ENCODE measurements at regions of chr2 and their contacts with region 1.

Region 1: DNA sequence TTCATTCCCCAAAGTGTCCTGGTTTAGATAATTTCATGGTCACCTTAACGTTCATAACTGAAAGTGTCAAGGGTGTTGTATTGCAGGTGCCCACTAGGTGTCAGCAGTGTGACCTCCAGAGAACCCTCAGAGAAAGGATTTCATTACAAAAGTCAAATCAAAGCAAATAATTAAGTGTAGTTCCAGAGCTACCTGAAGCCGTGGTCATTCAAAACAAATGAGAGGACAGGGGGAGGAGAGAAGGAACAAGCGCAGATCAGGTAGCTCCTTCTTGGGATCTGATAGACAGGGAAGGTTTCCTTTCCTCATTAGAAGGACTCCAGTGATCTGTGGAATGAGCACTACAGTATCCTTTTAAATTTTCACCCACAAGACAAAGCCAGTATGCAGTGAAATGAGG is at the start of gene SLC9A4:
- DNase-seq: peak; percentile 62
- H3K4me3 ChIP-seq: no peak within 1 kb of the TSS
- H3K27ac ChIP-seq: no peak within 1 kb of the TSS
- H3K4me1 ChIP-seq: no peaks in the 10 kb centered on the region
- H3K27me3 ChIP-seq: peaks cover 31 to 49% of the 10 kb centered on the region in 2 experiments
- CTCF ChIP-seq: peak; percentile 76 to 80
- POLR2A ChIP-seq: no peak
- total RNA-seq, gene SLC9A4: 0.07 TPM in 1 of 2 replicates, not detected in the other

Region 2: DNA sequence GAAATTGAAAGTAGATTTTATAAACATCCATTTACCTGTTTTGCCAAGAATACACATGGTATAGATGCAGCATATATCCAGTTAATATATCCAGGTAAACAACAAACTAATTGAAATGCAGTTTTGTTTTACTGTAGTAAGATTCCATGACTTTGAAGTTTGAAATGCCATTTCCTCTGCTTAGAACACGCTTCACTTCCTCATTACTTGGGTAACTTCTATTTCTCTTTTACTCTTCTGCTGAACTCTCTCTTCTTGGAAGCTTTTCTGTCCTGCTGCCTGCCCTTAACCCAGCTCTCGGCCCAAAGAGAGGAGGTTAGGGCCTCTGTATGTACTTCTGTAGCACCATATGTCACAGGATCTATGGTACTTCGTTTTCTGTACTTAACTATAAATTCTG is 300.3 kb before region 1 on chr2:
- CTCF ChIA-PET with region 1: no interaction called
- POLR2A ChIA-PET with region 1: no interaction called
- dilution Hi-C with region 1: no loop called
- intact Hi-C with region 1: no loop called
- DNase-seq: no peak
- H3K4me3 ChIP-seq: no peak overlapping the region
- H3K27ac ChIP-seq: no peak overlapping the region
- H3K4me1 ChIP-seq: no peaks in the 10 kb centered on the region
- H3K27me3 ChIP-seq: no peaks in the 10 kb centered on the region
- CTCF ChIP-seq: no peak
- POLR2A ChIP-seq: no peak

Region 3: GRCh38 chr2:102321941-102322719 is 150.9 kb before region 1 on chr2:
- CTCF ChIA-PET with region 1: no interaction called
- POLR2A ChIA-PET with region 1: no interaction called
- dilution Hi-C with region 1: no loop called
- intact Hi-C with region 1: no loop called
- DNase-seq: peak; percentile 51
- H3K4me3 ChIP-seq: no peak overlapping the region
- H3K27ac ChIP-seq: no peak overlapping the region
- H3K4me1 ChIP-seq: peaks cover 16% of the 10 kb centered on the region
- H3K27me3 ChIP-seq: no peaks in the 10 kb centered on the region
- CTCF ChIP-seq: no peak
- POLR2A ChIP-seq: no peak

Region 4: DNA sequence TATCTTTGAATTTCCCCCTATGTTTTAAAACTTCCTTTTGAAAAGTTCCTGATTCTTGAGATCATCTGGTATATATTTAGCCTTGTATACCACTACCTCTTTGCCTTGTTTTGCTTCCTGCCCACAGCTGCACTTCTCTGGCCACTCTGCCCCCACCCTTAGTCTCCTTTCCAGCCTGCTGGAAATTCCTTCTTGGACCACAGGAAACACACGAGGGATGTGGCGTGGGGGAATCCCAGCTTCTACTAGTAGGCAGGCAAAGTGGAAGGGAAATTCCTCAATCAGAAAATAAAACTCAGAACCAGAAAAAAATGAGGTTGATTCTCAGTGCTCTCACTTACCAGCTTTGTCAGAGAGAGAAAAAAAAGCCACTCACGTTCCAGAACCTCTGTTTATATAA is 36.7 kb before region 1 on chr2:
- CTCF ChIA-PET with region 1: no interaction called
- POLR2A ChIA-PET with region 1: no interaction called
- dilution Hi-C with region 1: no loop called
- intact Hi-C with region 1: no loop called
- DNase-seq: peak; percentile 79
- H3K4me3 ChIP-seq: no peak overlapping the region
- H3K27ac ChIP-seq: no peak overlapping the region
- H3K4me1 ChIP-seq: peaks cover 7% of the 10 kb centered on the region
- H3K27me3 ChIP-seq: no peaks in the 10 kb centered on the region
- CTCF ChIP-seq: no peak
- POLR2A ChIP-seq: no peak

Region 5: DNA sequence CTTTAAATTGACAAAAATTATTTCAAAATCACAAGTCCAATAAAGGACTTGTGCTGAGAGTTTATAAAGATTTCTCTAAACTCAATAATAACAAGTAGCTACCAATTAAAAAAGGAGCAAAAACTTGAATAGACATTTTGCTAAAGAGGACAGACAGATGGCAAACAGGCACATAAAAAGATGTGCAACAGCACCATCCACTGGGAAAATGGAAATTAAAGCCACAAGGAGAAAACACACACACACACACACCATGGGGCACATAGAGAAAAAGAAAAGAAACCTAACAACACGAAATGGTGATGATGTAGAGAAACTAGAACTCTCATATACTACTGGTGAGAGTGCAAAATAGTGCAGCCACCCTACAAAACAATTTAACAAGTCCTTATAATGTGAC is 12.6 kb before region 1 on chr2:
- CTCF ChIA-PET with region 1: interaction called, 10 read pairs
- POLR2A ChIA-PET with region 1: no interaction called
- dilution Hi-C with region 1: no loop called
- intact Hi-C with region 1: no loop called
- DNase-seq: no peak
- H3K4me3 ChIP-seq: no peak overlapping the region
- H3K27ac ChIP-seq: no peak overlapping the region
- H3K4me1 ChIP-seq: no peaks in the 10 kb centered on the region
- H3K27me3 ChIP-seq: peaks cover 9 to 19% of the 10 kb centered on the region in 2 experiments
- CTCF ChIP-seq: no peak
- POLR2A ChIP-seq: no peak

Region 6: DNA sequence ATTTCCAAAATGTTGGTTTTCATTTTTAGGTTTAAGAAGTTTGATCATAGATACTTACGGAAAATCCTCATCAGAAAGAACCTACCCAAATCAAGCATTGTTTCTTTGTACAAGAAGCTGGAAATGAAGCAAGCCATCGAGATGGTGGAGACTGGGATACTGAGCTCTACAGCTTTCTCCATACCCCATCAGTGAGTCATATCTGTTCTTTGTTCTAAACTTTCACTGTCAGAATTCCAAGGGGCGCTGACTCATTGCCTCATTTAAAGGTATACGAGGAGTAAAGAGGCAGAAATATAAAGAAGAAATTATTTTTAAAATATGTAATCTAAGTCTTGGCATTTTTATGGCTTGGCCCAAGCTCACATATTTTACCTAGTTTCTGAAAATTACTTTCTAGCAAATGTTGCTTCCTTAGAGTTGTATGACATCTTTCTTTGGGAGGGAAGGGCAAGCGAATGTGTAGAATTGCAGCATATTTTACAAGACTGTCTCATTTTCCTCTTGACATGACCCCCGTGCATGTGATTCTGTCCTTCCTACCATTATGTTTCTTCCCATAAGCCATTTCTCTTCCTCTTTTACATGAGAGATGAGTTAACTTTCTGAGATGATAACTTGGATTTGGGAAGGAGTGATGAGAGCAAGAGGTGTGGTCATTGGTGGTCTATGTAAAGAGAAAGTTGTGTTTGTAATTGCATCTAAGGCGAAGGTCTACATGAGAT is 41.2 kb after region 1 on chr2:
- CTCF ChIA-PET with region 1: interaction called, 13 read pairs
- POLR2A ChIA-PET with region 1: no interaction called
- dilution Hi-C with region 1: no loop called
- intact Hi-C with region 1: no loop called
- DNase-seq: peak; percentile 95
- H3K4me3 ChIP-seq: peak overlapping the region in 1 of 3 experiments; percentile 45
- H3K27ac ChIP-seq: peak overlapping the region; percentile 92
- H3K4me1 ChIP-seq: peaks cover 25% of the 10 kb centered on the region
- H3K27me3 ChIP-seq: no peaks in the 10 kb centered on the region
- CTCF ChIP-seq: no peak
- POLR2A ChIP-seq: peak; percentile 39

Region 7: GRCh38 chr2:102592597-102592996 is 119.6 kb after region 1 on chr2:
- CTCF ChIA-PET with region 1: interaction called, 70 read pairs
- POLR2A ChIA-PET with region 1: no interaction called
- dilution Hi-C with region 1: loop called (anchors 25 kb)
- intact Hi-C with region 1: loop called (anchors 1 kb)
- DNase-seq: peak; percentile 36
- H3K4me3 ChIP-seq: no peak overlapping the region
- H3K27ac ChIP-seq: no peak overlapping the region
- H3K4me1 ChIP-seq: no peaks in the 10 kb centered on the region
- H3K27me3 ChIP-seq: peaks cover 12 to 20% of the 10 kb centered on the region in 2 experiments
- CTCF ChIP-seq: peak; percentile 38 to 52
- POLR2A ChIP-seq: no peak

Region 8: DNA sequence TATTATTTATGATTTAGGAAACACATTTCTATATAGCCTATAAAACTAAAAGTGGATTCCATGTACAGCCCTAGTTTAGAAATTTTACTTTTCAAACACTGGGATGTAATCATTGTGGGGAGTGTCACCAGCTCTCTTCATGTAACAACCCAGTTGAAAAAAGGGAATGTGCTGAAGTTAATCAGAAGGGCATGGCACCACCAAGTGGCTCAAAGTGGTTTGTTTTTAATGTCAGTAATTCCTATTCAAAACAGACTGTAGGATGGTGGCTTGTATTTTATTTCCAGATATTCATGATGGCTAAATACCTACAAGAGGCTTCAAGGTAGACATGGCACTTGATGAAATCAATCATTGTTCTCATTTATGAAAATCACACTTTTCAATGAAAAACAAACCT is 230.7 kb after region 1 on chr2:
- CTCF ChIA-PET with region 1: interaction called, 31 read pairs
- POLR2A ChIA-PET with region 1: no interaction called
- dilution Hi-C with region 1: no loop called
- intact Hi-C with region 1: loop called (anchors 1 kb)
- DNase-seq: peak; percentile 28
- H3K4me3 ChIP-seq: no peak overlapping the region
- H3K27ac ChIP-seq: no peak overlapping the region
- H3K4me1 ChIP-seq: no peaks in the 10 kb centered on the region
- H3K27me3 ChIP-seq: peaks cover 7 to 15% of the 10 kb centered on the region in 2 experiments
- CTCF ChIP-seq: no peak
- POLR2A ChIP-seq: no peak

Measured in endothelial cell of umbilical vein (primary cell).